Right lobe of liver (tissue), 6 donors: ENCODE measurements at regions of chr18 and their contacts with region 1.

Region 1: DNA sequence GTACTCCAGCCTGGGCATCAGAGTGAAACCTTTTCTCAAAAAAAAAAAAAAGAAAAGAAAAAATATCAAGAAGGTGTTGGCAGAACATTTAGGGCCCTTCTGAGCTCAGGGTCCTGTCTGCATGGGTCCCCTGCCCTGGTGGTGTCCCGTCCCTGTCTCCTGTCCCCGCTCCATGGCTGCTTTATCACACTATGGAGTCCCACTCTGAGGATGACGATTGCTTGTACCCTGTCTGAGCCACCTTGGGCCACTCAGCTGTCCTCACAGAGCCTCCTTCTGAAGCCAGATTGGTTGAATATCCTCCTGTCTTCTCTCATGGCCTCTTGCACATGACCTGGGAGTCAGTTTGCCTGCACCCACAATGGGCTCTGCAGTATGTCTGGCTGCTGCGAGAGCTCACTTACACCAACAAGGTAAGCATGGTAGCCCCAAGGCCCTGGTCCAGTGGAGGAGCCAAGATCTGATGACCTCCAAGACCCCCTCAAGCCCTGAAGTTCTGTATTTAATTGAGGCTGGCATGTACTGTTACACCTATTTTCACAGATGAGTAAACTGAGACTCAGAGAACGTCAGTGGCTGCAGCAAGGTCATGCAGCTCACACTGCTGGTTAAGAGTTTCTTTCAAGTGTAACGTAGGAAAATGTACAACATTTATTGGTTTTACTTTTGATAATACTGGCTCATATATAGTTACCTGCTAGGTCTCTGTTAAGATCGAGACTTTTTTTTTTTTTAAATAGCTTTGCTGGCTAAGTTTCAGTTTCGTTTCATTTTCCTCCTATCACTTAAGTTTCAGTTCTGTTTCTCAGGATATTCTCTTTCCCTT is 16.9 kb upstream of the ZCCHC2 start:
- DNase-seq: no peak
- ATAC-seq: peak; percentile 33 to 53 (median 40)
- H3K4me3 ChIP-seq: peak overlapping the region; percentile 26 to 52 (median 48)
- H3K27ac ChIP-seq: peak overlapping the region; percentile 83 to 90 (median 83)
- H3K4me1 ChIP-seq: peaks cover 0 to 30% (median 8%) of the 10 kb centered on the region in 4 donors
- H3K27me3 ChIP-seq: no peaks in the 10 kb centered on the region
- CTCF ChIP-seq: no peak
- POLR2A ChIP-seq: no peak

Region 2: DNA sequence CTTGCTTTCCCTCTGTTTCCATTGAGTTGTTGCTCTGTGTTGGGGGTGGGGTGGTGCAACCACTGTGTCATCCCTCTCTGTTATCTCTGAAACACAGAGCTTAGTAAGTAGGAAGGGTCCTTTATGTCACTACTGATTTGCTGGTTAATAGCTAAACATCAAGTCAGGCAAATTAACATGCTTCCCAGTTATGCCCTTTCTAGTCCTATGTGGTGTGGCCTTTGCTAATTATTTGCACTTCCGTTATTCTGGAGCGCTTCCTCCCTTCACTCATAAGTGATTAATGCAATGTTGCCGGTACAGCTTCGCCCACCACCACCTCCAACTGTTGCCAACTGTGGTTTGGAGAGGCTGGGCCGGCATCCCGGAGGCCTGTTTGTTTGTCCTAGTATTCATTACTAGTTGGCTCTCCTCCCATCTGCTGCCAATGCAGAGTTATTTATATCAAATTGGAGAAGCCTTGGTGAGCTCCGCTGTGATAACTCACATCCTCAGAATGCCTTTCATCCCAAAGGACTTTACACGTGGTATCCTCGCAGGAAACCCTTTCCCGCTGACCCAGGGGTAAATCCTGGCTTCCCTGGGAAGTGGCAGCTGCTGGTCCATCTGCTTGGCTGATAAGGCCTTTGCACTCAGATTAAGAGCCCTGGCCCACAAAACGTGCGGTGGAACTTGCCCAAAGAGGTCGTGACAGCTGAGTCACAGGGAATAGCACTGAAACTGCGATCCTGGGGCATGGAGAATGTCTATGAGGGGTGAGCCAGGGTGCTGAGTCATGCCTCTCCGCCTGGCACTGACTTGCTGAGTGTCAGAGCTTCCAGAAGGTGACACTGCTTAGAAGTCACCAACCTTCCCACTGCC is 55.1 kb before region 1 on chr18:
- intact Hi-C with region 1: loop called in 1 of 2 experiments (anchors 10 kb)
- DNase-seq: peak; percentile 89 to 92 (median 92)
- ATAC-seq: peak; percentile 73 to 80 (median 78)
- H3K4me3 ChIP-seq: no peak overlapping the region
- H3K27ac ChIP-seq: peak overlapping the region; percentile 20 to 68 (median 65)
- H3K4me1 ChIP-seq: peaks cover 0 to 52% (median 17%) of the 10 kb centered on the region in 4 donors
- H3K27me3 ChIP-seq: no peaks in the 10 kb centered on the region
- CTCF ChIP-seq: no peak
- POLR2A ChIP-seq: no peak